ENCODE measurements at regions of chr12 and their contacts with region 1.

Region 1: GRCh38 chr12:55746147-55746912 is 3.4 kb downstream of the GDF11 start:
- DNase-seq: no peak
- H3K4me3 Mint-ChIP-seq: no peak overlapping the region
- H3K27ac Mint-ChIP-seq: no peak overlapping the region
- H3K4me1 Mint-ChIP-seq: peaks cover 23% of the 10 kb centered on the region
- H3K27me3 Mint-ChIP-seq: peaks cover 17% of the 10 kb centered on the region
- CTCF ChIP-seq: no peak

Region 2: DNA sequence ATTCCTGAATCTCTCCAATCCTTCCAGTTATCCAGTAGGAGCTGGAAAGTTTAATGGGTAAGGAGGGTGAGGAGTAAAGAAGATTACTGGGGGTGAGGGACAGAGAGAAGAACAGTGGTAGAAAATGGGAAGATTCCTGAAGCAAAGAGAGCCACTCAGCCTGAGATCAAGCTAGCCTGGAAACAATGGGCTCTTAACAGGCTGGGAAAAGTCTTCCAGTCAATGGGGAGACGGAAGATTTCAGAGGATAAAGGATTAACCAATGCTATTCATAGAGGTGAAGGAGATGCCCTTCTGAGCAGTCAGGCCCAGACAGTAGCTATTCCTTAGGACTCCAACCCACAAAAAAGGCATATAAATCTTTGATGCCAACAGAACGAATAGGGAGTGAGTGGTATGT is 11.4 kb after region 1 on chr12:
- CTCF ChIA-PET with region 1: interaction called, 6 read pairs
- POLR2A ChIA-PET with region 1: interaction called, 10 read pairs
- intact Hi-C with region 1: no loop called
- DNase-seq: no peak
- H3K4me3 Mint-ChIP-seq: no peak overlapping the region
- H3K27ac Mint-ChIP-seq: no peak overlapping the region
- H3K4me1 Mint-ChIP-seq: peaks cover 6% of the 10 kb centered on the region
- H3K27me3 Mint-ChIP-seq: no peaks in the 10 kb centered on the region
- CTCF ChIP-seq: no peak

Measured in MCF 10A (cell line).